ENCODE measurements at regions of chr17 and their contacts with region 1.

Region 1: GRCh38 chr17:55527540-55528118 is 16.4 kb upstream of the SMIM36 start:
- DNase-seq: peak; percentile 30
- H3K4me3 ChIP-seq: no peak overlapping the region
- H3K27ac ChIP-seq: no peak overlapping the region
- H3K4me1 ChIP-seq: no peaks in the 10 kb centered on the region
- H3K27me3 ChIP-seq: no peaks in the 10 kb centered on the region
- CTCF ChIP-seq: peak; percentile 41 to 76

Region 2: DNA sequence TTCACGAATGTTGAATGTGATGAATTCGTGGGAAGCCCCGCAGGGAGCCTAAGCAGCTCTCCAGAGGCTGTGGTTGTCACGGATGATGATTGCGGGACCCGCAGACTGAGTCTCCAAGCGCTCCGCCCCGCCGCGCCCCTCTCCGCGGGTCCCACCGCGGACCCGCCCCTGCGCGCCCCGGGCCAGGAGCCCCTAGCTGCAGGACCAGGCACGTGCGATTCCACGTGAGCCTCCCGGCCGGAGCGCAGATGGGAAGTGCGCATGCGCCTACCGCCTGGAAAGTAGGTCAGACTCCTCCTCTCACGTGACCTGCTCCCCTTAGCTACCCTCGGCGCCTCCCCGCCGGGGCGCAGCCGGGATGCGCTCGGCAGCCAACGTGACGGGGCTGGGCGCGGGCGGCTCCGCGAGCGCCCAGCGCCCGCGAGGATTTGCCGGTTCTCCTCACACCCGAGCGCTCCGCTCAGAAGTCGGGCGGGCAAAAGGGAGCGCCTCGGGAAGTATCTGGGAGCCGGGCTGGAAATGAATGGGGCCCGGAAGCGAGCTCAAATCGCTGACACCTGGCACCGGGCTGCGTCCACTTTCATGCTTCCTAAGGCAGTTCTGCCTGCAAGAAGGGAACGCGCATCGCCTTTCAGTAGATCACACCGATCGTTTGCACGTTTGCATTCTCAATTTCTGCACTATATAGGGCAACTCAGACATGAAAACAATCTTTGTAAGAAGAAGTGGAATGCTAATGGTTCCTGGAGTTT is 289.3 kb before region 1 on chr17:
- CTCF ChIA-PET with region 1: no interaction called
- dilution Hi-C with region 1: no loop called
- in situ Hi-C with region 1: no loop called
- intact Hi-C with region 1: no loop called
- DNase-seq: peak; percentile 89
- H3K4me3 ChIP-seq: peak overlapping the region; percentile 33 to 65 (median 65)
- H3K27ac ChIP-seq: peak overlapping the region; percentile 20
- H3K4me1 ChIP-seq: peaks cover 9% of the 10 kb centered on the region
- H3K27me3 ChIP-seq: no peaks in the 10 kb centered on the region
- CTCF ChIP-seq: no peak

Region 3: DNA sequence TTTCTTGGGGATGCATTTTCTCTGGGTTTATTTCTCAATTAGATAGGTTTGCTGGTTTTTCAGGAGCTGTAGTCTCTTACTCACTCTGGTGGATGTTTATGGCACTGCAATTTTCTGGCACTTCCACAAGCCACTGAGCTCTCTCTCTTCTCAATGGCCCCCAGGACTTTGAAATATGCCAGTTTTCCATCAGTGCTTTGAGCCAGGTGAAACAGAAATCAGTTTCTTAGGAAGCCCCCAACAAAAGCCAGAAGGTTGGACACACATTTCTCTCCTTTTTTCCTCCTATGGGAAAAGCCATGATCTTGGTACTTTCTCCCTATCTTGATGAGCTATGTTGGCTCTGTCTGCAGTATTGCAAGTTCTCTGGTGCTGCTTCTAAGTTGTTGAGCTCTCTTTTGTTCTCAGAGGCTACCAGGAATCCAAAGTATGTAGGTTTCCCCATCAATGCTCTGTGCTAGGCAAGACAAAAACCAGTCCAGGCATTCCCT is 74.3 kb after region 1 on chr17:
- CTCF ChIA-PET with region 1: interaction called, 6 read pairs
- dilution Hi-C with region 1: no loop called
- in situ Hi-C with region 1: loop called (anchors 5 kb)
- intact Hi-C with region 1: loop called (anchors 1 kb)
- DNase-seq: peak; percentile 27
- H3K4me3 ChIP-seq: no peak overlapping the region
- H3K27ac ChIP-seq: no peak overlapping the region
- H3K4me1 ChIP-seq: no peaks in the 10 kb centered on the region
- H3K27me3 ChIP-seq: no peaks in the 10 kb centered on the region
- CTCF ChIP-seq: peak; percentile 75 to 81

Region 4: DNA sequence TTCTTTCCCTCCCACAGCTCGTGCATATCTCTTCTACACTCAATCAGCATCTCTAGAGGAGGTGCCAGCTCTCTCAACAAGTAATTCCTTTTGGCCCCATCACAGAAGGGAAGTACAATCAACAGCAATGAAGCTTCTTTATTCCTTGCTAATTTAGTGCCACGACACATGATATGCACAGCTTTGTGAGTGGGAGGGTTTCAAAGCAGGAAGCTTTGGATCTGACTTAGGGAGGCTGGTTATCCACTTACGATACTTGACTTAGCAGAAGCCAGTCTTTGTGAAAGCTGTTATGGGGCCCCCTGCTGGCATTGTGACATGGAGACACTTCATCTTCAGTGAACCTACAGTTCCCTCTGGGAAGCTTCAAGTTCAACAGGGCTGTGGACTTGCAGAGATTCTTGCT is 114.0 kb after region 1 on chr17:
- CTCF ChIA-PET with region 1: no interaction called
- dilution Hi-C with region 1: no loop called
- in situ Hi-C with region 1: no loop called
- intact Hi-C with region 1: loop called (anchors 1 kb)
- DNase-seq: peak; percentile 31
- H3K4me3 ChIP-seq: no peak overlapping the region
- H3K27ac ChIP-seq: no peak overlapping the region
- H3K4me1 ChIP-seq: no peaks in the 10 kb centered on the region
- H3K27me3 ChIP-seq: no peaks in the 10 kb centered on the region
- CTCF ChIP-seq: peak; percentile 63 to 75

Region 5: GRCh38 chr17:55750750-55751657 is 223.4 kb after region 1 on chr17 and contains the start of gene PCTP:
- CTCF ChIA-PET with region 1: no interaction called
- dilution Hi-C with region 1: loop called (anchors 25 kb)
- in situ Hi-C with region 1: no loop called
- intact Hi-C with region 1: no loop called
- DNase-seq: peak; percentile 92
- H3K4me3 ChIP-seq: peak within 1 kb of the TSS; percentile 62 to 90 (median 78)
- H3K27ac ChIP-seq: peak within 1 kb of the TSS; percentile 29
- H3K4me1 ChIP-seq: peaks cover 12% of the 10 kb centered on the region
- H3K27me3 ChIP-seq: no peaks in the 10 kb centered on the region
- CTCF ChIP-seq: peak; percentile 20 to 63
- total RNA-seq, gene PCTP: 16.3 to 27.8 TPM

Region 6: DNA sequence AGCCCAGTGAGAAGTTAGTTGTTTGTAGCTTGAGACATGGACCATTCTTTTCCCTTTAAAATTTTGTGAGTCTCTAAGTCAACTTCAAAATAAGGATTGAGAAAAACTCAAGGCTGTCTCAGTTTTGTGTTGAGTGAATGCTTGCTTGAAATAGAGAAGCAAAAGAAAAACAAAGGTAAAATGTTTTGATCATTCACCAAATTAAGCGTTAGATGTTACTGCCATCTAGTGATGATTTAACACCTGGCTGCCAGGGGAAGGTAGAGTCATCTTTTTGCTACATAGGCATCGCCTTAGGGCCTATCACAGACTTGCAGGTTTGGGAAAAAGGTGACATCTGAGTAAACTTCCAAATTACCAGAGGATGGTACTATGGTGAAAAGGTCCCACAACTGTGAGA is 297.6 kb after region 1 on chr17:
- CTCF ChIA-PET with region 1: no interaction called
- dilution Hi-C with region 1: no loop called
- in situ Hi-C with region 1: loop called in 1 of 2 experiments (anchors 5 kb)
- intact Hi-C with region 1: loop called (anchors 1 kb)
- DNase-seq: peak; percentile 7
- H3K4me3 ChIP-seq: no peak overlapping the region
- H3K27ac ChIP-seq: no peak overlapping the region
- H3K4me1 ChIP-seq: no peaks in the 10 kb centered on the region
- H3K27me3 ChIP-seq: peaks cover 6% of the 10 kb centered on the region
- CTCF ChIP-seq: peak; percentile 46 to 53

Region 7: GRCh38 chr17:56478836-56479447 is 951.3 kb after region 1 on chr17:
- CTCF ChIA-PET with region 1: no interaction called
- dilution Hi-C with region 1: no loop called
- in situ Hi-C with region 1: no loop called
- intact Hi-C with region 1: loop called (anchors 2 kb)
- DNase-seq: peak; percentile 32
- H3K4me3 ChIP-seq: no peak overlapping the region
- H3K27ac ChIP-seq: no peak overlapping the region
- H3K4me1 ChIP-seq: no peaks in the 10 kb centered on the region
- H3K27me3 ChIP-seq: peaks cover 1% of the 10 kb centered on the region
- CTCF ChIP-seq: peak; percentile 55 to 59

Measured in mammary epithelial cell (primary cell).